Calu3 (cell line): ENCODE measurements at regions of chr9 and their contacts with region 1.

Region 1: DNA sequence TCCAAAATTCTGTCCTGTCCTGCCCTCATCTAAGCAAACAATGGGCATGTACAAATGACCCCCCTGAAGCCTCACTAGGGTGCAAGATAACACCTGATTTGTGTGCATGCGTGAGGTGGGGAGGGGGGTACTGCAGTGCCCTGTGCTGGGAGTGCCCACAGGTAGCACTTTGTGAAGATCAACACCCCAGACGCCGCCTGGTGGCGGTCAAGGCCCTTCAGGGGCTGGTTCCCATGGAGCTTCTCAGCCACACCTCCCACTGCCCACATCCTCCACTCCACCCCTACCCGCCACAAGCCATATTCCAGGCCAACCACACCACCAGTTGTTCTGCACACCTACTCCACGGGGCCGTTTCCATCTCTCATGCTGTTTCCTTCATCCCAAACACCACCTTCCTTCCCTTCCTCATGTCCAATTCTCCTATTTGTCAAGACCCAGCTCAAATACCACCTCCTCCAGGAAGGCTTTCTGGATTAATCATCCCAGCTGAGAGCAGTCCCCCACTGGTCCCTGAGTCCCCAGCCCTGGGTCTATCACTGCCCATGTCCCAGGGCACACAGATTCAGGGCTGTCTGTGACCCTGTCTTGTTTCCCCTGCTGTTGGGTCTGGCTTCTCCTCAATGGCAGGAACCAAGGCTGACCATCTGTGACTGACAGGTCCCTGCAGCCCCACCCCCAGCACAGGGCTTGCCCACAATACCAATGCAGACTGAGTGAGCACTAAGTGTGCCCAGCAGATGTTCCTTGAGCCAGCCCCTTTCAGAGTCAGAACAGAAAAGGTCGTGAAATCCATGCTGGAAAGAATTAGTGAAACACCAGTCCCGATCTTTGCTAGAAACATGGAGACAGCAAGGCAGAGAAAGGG is 178.4 kb downstream of the PAX5 start:
- DNase-seq: peak; percentile 41
- H3K4me3 Mint-ChIP-seq: no peak overlapping the region
- H3K27ac Mint-ChIP-seq: no peak overlapping the region
- H3K4me1 Mint-ChIP-seq: no peaks in the 10 kb centered on the region
- H3K27me3 Mint-ChIP-seq: peaks cover 25% of the 10 kb centered on the region
- CTCF ChIP-seq: no peak

Region 2: DNA sequence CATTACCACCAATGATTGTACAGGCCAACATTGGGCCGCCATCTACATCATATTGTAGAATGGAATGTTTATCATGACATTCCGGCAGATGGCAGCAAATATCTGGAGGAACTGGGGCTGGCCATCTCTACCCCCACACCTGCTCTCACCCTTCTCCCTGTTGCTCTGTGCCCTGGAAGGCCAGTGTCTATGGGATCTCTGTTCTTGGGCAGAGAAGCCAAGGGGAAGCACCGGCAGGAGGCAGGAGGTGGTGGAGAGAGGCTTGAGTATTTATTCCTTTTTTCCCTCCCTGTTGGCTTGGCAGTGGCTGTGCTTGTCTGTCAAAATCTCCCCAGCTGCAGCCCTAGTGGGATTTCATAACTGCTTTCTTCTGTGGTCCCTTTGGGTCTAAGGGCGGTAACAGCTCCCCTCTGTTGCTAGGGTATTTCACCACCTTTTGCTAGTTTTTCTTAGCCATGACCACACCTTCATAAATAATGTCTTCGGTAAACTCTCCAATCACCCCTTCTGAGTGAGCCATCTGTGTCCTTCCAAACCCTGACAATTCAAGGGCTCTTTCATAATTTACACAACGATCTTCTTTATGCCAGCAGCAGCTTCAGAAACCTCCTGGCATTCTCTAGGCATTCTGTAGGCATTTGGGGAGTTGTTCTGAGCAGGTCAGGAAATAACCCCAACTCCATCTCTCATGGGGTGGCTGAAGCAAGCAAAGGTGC is 57.2 kb before region 1 on chr9:
- CTCF ChIA-PET with region 1: no interaction called
- intact Hi-C with region 1: loop called (anchors 2 kb)
- DNase-seq: peak; percentile 12
- H3K4me3 Mint-ChIP-seq: no peak overlapping the region
- H3K27ac Mint-ChIP-seq: no peak overlapping the region
- H3K4me1 Mint-ChIP-seq: no peaks in the 10 kb centered on the region
- H3K27me3 Mint-ChIP-seq: peaks cover 51% of the 10 kb centered on the region
- CTCF ChIP-seq: no peak